GM10248 (cell line): ENCODE measurements at regions of chr9 and their contacts with region 1.

Region 1: DNA sequence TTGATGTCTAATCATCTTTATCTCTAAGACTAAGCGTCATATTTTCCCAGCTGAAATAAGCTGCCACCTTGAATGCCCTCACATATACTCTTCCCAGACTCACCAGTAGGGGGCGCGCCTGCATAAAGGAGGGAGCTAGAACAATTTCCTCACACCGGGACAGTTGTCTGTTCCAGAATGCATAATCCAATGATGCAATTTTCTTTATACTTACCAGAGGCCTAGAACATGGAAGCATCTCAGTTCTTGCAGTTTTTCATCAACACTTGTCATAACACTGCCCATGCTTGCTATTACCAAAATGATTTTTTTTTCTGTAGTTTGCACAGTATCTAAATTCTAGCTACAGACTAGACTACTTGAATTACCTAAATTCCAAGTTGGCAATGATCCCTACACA is 203.9 kb downstream of the FRMD3 start:
- DNase-seq: peak; percentile 35
- CTCF ChIP-seq: peak; percentile 89

Region 2: DNA sequence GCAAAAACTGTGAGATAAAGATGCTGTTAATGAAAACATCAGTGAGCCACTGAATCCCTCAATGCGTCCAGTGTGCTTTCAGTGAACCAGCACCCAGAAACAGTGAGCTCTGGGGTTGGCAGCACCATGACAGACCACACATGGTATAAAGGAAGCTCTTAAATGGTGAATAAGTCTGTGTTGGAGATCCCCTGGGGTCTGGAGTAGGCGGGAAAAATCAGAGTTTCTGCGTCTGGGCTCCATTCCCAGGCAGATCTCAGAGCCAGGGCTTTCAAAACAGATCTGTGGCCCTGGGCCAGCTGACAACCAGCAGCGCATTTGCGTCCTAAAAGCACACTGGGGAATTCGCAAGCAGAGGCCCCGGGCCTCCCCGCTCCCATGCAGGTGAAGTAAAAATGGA is 29.6 kb before region 1 on chr9:
- CTCF ChIA-PET with region 1: interaction called, 13 read pairs
- POLR2A ChIA-PET with region 1: no interaction called
- DNase-seq: no peak
- CTCF ChIP-seq: no peak

Region 3: DNA sequence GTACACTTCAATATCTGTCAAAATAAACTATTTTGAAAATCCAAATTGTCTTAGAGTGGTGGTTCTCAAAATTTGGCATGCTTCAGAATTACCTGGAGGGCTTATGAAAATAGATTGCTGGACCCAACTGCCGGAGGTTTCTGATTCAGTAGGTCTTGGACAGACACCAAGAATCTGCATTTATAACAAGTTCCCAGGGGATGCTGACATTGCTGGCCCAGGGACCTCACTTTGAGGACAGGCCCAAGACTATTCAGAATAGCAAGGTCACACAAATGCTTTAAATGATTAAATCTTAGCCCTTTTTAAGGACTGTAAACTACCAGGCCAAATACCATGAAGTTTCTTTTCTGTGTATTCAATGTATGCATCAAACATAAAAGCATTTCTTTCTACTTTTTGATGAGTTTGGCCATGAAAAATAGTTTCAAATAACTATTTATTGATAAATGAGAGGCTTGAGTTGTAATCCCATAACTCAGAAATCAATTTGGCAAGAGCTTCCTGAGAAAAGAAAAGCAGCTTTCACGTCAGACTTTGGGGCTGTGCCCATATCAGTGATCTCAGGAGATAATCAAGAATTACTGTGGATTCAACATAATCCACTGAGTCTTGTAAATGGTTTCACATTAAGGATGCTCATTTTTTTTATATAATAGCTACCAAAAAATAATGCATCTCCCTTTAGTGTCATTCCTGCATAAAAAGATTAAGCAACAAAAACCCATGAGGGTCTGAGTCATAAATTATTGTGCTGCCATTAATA is 12.5 kb after region 1 on chr9:
- CTCF ChIA-PET with region 1: interaction called, 92 read pairs
- POLR2A ChIA-PET with region 1: no interaction called
- DNase-seq: no peak
- CTCF ChIP-seq: no peak

Region 4: GRCh38 chr9:83505282-83505681 is 171.0 kb after region 1 on chr9:
- CTCF ChIA-PET with region 1: interaction called, 11 read pairs
- POLR2A ChIA-PET with region 1: no interaction called
- DNase-seq: no peak
- CTCF ChIP-seq: no peak

Region 5: DNA sequence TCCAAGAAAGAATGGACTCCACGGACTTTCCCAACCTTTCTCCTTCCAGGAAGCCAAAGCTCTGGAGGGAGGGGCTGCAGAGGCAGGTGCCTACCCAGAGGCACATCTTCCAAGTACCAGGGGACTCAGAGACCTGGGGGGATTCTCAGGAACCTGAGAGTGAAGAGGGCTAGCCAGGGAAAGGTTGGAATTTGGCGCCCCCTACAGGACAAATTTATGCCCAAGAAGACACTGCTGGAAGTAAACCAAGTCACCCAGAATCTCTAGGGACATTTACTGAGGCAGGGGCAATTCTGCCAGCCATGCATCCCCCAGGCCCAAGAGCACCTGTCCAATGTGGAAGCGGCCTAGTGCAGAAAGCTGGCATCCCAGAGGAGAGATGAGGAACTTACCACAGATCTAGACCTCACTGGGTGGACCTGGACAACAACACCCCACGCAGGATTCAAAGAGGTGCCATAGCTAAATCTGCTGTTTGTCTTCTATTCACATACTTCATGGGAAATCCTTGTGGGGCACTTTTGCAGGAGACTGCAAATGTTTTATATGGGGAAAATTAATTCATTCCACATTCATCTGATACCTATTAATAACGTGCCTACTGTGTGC is 262.7 kb after region 1 on chr9:
- CTCF ChIA-PET with region 1: interaction called, 32 read pairs
- POLR2A ChIA-PET with region 1: no interaction called
- DNase-seq: peak; percentile 68
- CTCF ChIP-seq: peak; percentile 69

Region 6: GRCh38 chr9:83649080-83649479 is 314.8 kb after region 1 on chr9:
- CTCF ChIA-PET with region 1: interaction called, 27 read pairs
- POLR2A ChIA-PET with region 1: no interaction called
- DNase-seq: peak; percentile 70
- CTCF ChIP-seq: peak; percentile 82